ENCODE measurements at regions of chr18 and their contacts with region 1.

Region 1: GRCh38 chr18:7805880-7806279 is 238.8 kb downstream of the PTPRM start:
- DNase-seq: no peak
- ATAC-seq: peak in 2 of 4 donors; percentile 38 to 50
- H3K4me3 ChIP-seq: no peak overlapping the region
- H3K27ac ChIP-seq: no peak overlapping the region
- H3K4me1 ChIP-seq: peaks cover 0 to 74% (median 32%) of the 10 kb centered on the region in 12 donors
- H3K27me3 ChIP-seq: no peaks in the 10 kb centered on the region
- CTCF ChIP-seq: peak in 2 of 12 donors; percentile 7 to 15
- POLR2A ChIP-seq: no peak

Region 2: GRCh38 chr18:7749510-7749981 is 56.3 kb before region 1 on chr18:
- intact Hi-C with region 1: loop called in 1 of 10 experiments (anchors 10 kb)
- DNase-seq: no peak
- ATAC-seq: peak; percentile 58 to 73 (median 68)
- H3K4me3 ChIP-seq: no peak overlapping the region
- H3K27ac ChIP-seq: peak overlapping the region in 10 of 12 donors; percentile 6 to 62 (median 42)
- H3K4me1 ChIP-seq: peaks cover 3 to 77% (median 58%) of the 10 kb centered on the region in 12 donors
- H3K27me3 ChIP-seq: no peaks in the 10 kb centered on the region
- CTCF ChIP-seq: no peak
- POLR2A ChIP-seq: no peak

Region 3: DNA sequence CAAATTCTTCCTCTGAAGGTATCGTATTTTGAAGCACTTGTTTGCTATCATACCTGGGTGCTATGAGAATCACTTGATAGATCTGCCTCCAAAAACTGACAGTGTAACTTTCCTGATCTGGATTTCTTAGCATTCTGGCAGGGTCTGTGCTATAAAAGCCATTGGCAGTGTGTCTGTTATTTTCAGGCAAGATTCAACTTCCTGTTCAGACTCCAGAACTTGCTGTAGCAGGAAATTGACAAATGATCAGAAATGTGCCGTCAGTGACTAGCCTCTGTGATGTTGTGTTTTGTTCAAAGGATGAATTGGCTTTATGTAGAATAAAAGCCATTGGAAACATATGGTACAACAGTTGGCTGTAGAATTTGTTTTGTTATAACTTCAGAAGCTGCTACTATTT is 34.5 kb after region 1 on chr18:
- intact Hi-C with region 1: no loop called
- DNase-seq: no peak
- ATAC-seq: peak in 1 of 4 donors; percentile 38
- H3K4me3 ChIP-seq: no peak overlapping the region
- H3K27ac ChIP-seq: peak overlapping the region in 2 of 12 donors; percentile 0 to 31
- H3K4me1 ChIP-seq: peaks cover 0 to 46% (median 15%) of the 10 kb centered on the region in 12 donors
- H3K27me3 ChIP-seq: no peaks in the 10 kb centered on the region
- CTCF ChIP-seq: no peak
- POLR2A ChIP-seq: no peak

Region 4: DNA sequence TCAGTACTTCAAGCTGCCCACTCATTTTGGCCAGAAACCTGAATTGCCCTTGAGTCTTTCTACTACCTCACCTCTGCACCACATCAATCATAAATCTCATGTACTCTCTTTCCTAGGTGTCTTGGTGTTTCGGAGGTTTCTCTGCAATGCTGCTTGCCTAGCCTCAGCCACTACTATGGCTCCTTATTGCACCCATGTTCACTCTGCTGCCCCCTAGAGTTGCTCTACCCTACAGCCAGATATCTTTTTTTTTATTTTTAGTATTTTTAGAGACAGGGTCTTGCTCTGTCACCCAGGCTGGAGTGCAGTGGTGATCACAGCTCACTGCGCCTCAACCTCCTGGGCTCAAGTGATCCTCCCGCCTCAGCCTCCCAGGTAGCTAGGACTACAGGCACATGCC is 174.3 kb after region 1 on chr18:
- intact Hi-C with region 1: loop called in 1 of 10 experiments (anchors 10 kb)
- DNase-seq: no peak
- ATAC-seq: no peak
- H3K4me3 ChIP-seq: no peak overlapping the region
- H3K27ac ChIP-seq: no peak overlapping the region
- H3K4me1 ChIP-seq: peaks cover 3 to 44% (median 10%) of the 10 kb centered on the region in 12 donors
- H3K27me3 ChIP-seq: no peaks in the 10 kb centered on the region
- CTCF ChIP-seq: peak in 1 of 12 donors; percentile 20
- POLR2A ChIP-seq: no peak